Astrocyte of the cerebellum (primary cell): ENCODE measurements at regions of chr19 and their contacts with region 1.

Region 1: DNA sequence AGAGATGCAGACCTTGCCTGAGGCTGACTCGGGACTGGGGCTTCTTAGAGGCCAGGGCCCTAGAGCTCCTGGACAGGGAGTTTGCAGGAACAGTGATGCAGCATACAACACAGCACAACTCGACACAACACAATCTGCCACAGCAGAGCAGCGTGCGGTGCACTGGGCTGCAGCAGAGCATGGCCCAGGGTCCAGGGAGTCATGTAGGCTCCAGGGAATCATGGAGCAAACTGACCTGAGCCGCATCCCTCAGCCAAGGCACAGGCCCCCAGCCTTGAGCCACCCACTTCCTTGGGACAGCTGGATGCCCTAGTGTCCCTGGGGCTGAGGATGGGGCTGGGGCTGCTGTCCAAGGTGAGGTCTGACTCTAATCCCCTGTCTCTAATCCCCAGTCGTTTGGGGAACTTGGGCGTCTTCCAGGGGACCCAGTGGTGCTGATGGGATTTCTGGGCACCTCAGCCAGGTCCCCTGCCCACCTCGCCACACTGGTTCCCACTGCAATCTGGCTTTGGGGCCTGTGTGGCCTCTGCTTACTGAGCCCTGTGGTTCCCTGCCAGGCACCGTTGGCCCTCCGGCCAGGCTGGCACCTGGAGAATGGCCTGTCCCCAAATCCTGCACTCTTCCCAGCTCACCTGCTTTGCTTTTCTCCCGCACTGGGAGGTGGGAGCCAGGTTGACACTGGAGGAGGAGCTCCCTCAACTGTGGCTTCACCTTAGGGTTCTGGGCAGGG is 97.2 kb downstream of the SCGB2B2 start:
- DNase-seq: no peak
- H3K4me3 ChIP-seq: no peak overlapping the region
- CTCF ChIP-seq: no peak

Region 2: DNA sequence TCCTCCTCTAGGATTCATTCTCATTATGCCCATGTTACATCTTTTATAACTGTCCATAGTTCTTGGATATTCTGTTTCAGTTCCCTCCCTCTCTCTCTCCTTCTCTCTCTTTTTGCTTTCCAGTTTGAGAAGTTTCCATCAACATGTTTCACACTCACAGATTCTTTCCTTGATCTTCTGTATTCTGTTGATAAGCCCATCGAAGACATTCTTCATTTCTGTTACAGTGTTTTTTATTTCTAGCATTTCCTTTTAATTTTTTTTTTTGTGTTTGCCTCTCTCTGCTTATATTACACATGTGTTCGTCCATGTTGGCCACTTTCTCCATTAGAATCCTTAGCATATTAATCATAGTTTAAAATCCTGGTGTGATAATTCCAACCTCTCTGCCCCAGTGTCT is 29.9 kb before region 1 on chr19:
- in situ Hi-C with region 1: loop called (anchors 5 kb)
- DNase-seq: no peak
- H3K4me3 ChIP-seq: no peak overlapping the region
- CTCF ChIP-seq: no peak